OCI-LY7 (cell line): ENCODE measurements at regions of chr6 and their contacts with region 1.

Region 1: GRCh38 chr6:56359201-56359899 is 112.0 kb upstream of the COL21A1 start:
- DNase-seq: peak; percentile 68
- H3K4me3 ChIP-seq: no peak overlapping the region
- H3K27ac ChIP-seq: no peak overlapping the region
- H3K4me1 ChIP-seq: no peaks in the 10 kb centered on the region
- CTCF ChIP-seq: peak; percentile 89

Region 2: GRCh38 chr6:55980627-55981211 is 378.6 kb before region 1 on chr6:
- CTCF ChIA-PET with region 1: no interaction called
- POLR2A ChIA-PET with region 1: no interaction called
- intact Hi-C with region 1: no loop called
- DNase-seq: peak; percentile 22
- H3K4me3 ChIP-seq: no peak overlapping the region
- H3K27ac ChIP-seq: no peak overlapping the region
- H3K4me1 ChIP-seq: no peaks in the 10 kb centered on the region
- CTCF ChIP-seq: peak; percentile 92

Region 3: GRCh38 chr6:56549014-56549413 is 189.7 kb after region 1 on chr6:
- CTCF ChIA-PET with region 1: interaction called, 3 read pairs
- POLR2A ChIA-PET with region 1: interaction called, 3 read pairs
- intact Hi-C with region 1: loop called (anchors 1 kb)
- DNase-seq: peak; percentile 29
- H3K4me3 ChIP-seq: no peak overlapping the region
- H3K27ac ChIP-seq: no peak overlapping the region
- H3K4me1 ChIP-seq: peaks cover 15% of the 10 kb centered on the region
- CTCF ChIP-seq: peak; percentile 77

Region 4: DNA sequence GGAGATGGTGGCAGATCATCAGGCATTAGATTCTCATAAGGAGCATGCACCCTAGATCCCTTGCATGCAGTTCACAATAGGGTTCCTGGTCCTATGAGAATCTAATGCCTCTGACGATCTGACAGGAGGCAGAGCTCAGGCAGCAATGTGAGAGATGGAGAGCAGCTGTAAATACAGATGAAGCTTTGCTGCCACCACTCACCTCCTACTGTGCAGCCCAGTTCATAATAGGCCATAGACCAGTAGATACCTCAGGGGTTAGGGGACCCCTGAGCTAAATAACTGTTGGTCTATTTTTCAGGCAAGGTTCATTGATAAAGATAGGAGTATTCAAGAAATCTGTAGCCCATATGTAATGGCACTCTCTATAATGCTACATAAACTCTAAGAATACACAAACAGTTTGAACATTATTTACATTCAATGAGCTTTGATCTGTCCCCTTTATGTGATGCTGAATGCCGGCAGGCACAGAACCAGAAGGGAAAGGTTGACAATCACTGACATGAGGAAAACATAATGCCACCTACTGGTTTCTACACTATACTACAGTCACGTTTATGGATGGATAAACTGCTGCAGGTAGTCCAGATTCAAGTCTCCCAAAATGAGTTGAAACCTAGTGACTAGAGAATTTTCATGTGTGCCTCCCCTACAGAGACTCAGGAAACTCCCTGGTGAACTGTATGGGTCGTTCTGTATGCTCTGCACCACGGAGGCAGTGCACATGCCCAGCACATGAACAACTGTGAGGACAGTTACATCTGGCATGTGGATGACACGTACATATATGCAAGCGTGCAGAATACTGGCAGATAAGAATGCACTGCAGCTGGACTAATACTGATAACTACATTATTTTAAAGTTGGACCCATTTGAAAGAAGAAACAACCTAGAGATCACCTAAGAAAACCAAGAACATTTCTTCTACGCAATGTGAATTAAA is 211.3 kb after region 1 on chr6:
- CTCF ChIA-PET with region 1: no interaction called
- POLR2A ChIA-PET with region 1: no interaction called
- intact Hi-C with region 1: loop called (anchors 1 kb)
- DNase-seq: peak; percentile 47
- H3K4me3 ChIP-seq: no peak overlapping the region
- H3K27ac ChIP-seq: no peak overlapping the region
- H3K4me1 ChIP-seq: no peaks in the 10 kb centered on the region
- CTCF ChIP-seq: peak; percentile 78